ENCODE measurements at regions of chr3 and their contacts with region 1.

Region 1: GRCh38 chr3:32022947-32023346 is 41.4 kb downstream of the ZNF860 start:
- DNase-seq: no peak
- ATAC-seq: peak; percentile 30
- H3K4me3 ChIP-seq: no peak overlapping the region
- H3K27ac ChIP-seq: no peak overlapping the region
- H3K4me1 ChIP-seq: peaks cover 23% of the 10 kb centered on the region
- H3K27me3 ChIP-seq: no peaks in the 10 kb centered on the region
- CTCF ChIP-seq: no peak
- POLR2A ChIP-seq: no peak

Region 2: DNA sequence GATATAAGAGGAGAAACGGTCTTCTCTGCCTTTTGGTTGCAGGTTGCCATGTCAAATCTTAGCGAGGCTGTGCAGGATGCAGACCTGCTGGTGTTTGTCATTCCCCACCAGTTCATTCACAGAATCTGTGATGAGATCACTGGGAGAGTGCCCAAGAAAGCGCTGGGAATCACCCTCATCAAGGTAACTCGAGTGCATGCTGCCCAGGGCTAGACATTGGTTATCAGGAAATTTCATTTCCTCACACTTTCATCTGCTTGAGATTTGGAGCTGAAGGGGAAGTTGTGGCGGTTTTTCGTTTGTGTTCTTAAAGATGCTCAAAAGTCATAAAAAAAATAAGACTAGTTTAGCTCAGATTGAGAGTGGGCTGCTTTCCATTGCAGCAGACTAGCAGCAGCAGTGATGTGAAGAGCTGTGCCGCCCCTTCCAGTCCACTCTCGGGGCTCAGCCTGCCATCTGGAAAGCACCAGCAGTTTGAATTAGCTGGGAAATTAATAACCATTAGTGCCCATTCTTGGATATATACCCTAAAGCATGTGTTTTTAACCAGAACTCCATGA is 115.7 kb after region 1 on chr3:
- intact Hi-C with region 1: loop called (anchors 5 kb)
- DNase-seq: no peak
- ATAC-seq: no peak
- H3K4me3 ChIP-seq: no peak overlapping the region
- H3K27ac ChIP-seq: no peak overlapping the region
- H3K4me1 ChIP-seq: no peaks in the 10 kb centered on the region
- H3K27me3 ChIP-seq: no peaks in the 10 kb centered on the region
- CTCF ChIP-seq: no peak
- POLR2A ChIP-seq: no peak